ENCODE measurements at regions of chr5 and their contacts with region 1.

Region 1: GRCh38 chr5:88899096-88899737 is 16.2 kb upstream of the MEF2C start:
- DNase-seq: no peak
- ATAC-seq: no peak
- H3K4me3 ChIP-seq: no peak overlapping the region
- H3K27ac ChIP-seq: no peak overlapping the region
- H3K4me1 ChIP-seq: peaks cover 0 to 7% (median 0%) of the 10 kb centered on the region in 12 donors
- H3K27me3 ChIP-seq: no peaks in the 10 kb centered on the region
- CTCF ChIP-seq: no peak
- POLR2A ChIP-seq: no peak

Region 2: GRCh38 chr5:88860501-88860900 is 38.7 kb before region 1 on chr5:
- intact Hi-C with region 1: no loop called
- DNase-seq: no peak
- ATAC-seq: no peak
- H3K4me3 ChIP-seq: no peak overlapping the region
- H3K27ac ChIP-seq: no peak overlapping the region
- H3K4me1 ChIP-seq: peaks cover 0 to 40% (median 13%) of the 10 kb centered on the region in 12 donors
- H3K27me3 ChIP-seq: no peaks in the 10 kb centered on the region
- CTCF ChIP-seq: no peak
- POLR2A ChIP-seq: no peak

Region 3: DNA sequence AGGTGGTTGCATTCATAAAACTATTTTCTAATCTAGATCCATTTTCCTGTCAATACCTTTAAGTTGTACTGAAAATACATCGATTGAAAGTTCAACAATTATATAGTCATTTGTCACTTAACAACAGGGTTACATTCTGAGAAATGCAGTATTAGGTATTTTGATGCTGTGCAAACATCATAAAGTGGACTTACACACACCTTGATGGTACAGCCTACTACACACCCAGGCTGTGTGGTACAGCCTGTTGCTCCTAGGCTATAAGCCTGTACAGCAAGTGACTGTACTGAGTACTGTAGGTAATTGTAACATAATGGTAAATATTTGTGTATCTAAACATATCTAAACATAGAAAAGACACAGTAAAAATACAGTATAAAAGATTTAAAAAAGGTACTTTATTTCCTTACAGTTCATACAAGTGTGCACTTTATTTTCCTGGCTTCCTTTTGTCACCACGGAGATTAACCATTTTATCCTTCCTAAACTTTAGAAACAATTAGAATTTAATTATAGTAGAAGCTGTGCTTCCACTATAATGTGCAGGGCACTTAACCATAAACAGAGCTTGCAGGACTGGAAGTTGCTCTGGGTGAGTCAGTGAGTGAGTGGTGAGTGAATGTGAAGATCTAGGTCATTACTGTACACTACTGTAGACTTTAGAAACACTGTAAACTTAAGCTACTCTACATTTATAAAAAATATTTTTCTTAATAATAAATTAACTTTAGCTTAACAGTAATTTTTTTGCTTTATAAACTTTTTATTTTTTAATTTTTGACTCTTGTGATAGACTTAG is 26.7 kb after region 1 on chr5:
- intact Hi-C with region 1: loop called in 1 of 10 experiments (anchors 2 kb)
- DNase-seq: no peak
- ATAC-seq: no peak
- H3K4me3 ChIP-seq: no peak overlapping the region
- H3K27ac ChIP-seq: no peak overlapping the region
- H3K4me1 ChIP-seq: peaks cover 0 to 6% (median 0%) of the 10 kb centered on the region in 12 donors
- H3K27me3 ChIP-seq: no peaks in the 10 kb centered on the region
- CTCF ChIP-seq: no peak
- POLR2A ChIP-seq: no peak